Heart left ventricle (tissue), 16 donors: ENCODE measurements at regions of chr12 and their contacts with region 1.

Region 1: GRCh38 chr12:13094347-13094746 is 9.1 kb downstream of the GSG1 start:
- DNase-seq: no peak
- ATAC-seq: no peak
- H3K4me3 ChIP-seq: no peak overlapping the region
- H3K27ac ChIP-seq: peak overlapping the region in 1 of 12 donors; percentile 37
- H3K4me1 ChIP-seq: peaks cover 0 to 45% (median 14%) of the 10 kb centered on the region in 12 donors
- H3K27me3 ChIP-seq: no peaks in the 10 kb centered on the region
- CTCF ChIP-seq: no peak
- POLR2A ChIP-seq: no peak

Region 2: GRCh38 chr12:12916135-12916944 is 178.0 kb before region 1 on chr12:
- intact Hi-C with region 1: loop called in 4 of 10 experiments (anchors 5 to 10 kb)
- DNase-seq: peak; percentile 75 to 88 (median 84)
- ATAC-seq: peak; percentile 86 to 98 (median 96)
- H3K4me3 ChIP-seq: peak overlapping the region in 4 of 12 donors; percentile 10 to 23 (median 16)
- H3K27ac ChIP-seq: peak overlapping the region in 6 of 12 donors; percentile 5 to 46 (median 34)
- H3K4me1 ChIP-seq: peaks cover 0 to 14% (median 7%) of the 10 kb centered on the region in 12 donors
- H3K27me3 ChIP-seq: no peaks in the 10 kb centered on the region
- CTCF ChIP-seq: peak; percentile 96 to 99 (median 98)
- POLR2A ChIP-seq: no peak

Region 3: DNA sequence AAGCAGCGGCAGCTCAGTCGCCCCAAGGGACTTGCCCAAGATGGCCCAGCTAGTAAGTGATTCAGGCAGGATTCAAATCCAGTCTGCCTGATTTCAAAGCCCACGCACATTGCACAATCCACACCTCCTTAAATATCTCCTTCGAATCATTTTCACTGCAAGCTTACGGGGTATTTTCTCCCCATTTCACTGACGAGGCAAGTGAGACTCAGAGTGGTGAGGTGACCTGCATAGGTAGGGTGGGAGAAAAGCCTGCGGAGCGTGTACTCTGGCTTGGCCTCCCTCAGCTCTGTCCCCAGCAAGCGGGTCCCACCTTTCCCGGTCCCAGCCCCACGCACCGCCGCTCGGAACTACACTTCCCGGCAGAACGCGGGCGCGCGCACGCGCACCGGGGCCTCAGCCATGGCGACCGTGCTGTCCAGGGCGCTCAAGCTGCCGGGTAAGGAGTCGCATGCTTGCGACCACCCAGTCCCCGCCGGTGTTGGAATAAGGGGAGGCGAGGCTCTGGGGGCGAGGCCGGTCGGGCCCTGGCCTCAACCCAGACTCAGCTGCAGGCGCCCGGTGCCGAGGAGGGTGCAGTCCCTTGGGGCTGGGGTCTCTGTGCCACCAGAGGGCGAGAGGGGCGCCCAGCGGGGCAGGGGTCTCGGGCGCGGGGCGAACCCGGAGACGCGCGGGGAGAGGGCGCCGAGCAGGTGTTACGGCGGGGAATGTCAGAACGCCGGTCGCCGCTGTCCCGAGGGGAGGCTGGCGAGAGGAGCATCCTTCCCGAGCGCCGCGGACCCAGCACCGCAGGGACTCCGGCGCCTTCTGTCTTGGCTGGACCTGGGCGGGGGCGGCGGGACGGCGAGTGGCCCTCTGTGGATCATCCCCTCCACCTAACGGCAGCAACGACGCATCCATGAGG is 50.1 kb before region 1 on chr12 and contains the start of gene FAM234B:
- intact Hi-C with region 1: loop called in 1 of 10 experiments (anchors 2 kb)
- DNase-seq: peak; percentile 80 to 92 (median 85)
- ATAC-seq: peak; percentile 86 to 99 (median 98)
- H3K4me3 ChIP-seq: peak within 1 kb of the TSS; percentile 87 to 100 (median 96)
- H3K27ac ChIP-seq: peak within 1 kb of the TSS in 10 of 12 donors; percentile 22 to 83 (median 68)
- H3K4me1 ChIP-seq: peaks cover 0 to 22% (median 8%) of the 10 kb centered on the region in 12 donors
- H3K27me3 ChIP-seq: no peaks in the 10 kb centered on the region
- CTCF ChIP-seq: peak in 6 of 12 donors; percentile 10 to 57 (median 24)
- POLR2A ChIP-seq: no peak
- total RNA-seq, gene FAM234B: 1.5 to 3.5 (median 2.6) TPM

Region 4: DNA sequence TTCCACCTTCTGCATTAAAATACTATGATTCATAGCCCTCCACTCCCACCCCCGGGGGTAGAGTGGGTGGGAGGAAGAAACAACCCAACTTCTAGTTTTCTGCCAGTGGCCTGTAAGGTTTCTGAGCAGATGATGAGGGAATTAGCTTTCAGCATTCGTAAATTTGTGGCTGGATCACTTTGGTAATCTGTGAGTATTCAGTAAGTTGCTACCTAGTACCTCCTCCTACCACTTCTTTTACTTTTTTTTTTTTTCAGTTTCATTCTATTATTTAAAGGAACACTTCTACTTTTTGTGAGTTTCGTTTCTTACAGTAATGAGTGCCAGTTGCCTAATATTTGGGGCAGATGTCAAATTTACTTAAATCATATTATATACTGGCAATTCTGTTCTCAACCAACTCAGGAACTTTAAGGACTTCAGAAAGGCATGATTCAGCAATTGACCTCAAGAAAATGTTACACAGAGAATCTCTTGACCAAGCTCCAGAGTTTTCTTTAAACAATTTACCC is 59.7 kb after region 1 on chr12:
- intact Hi-C with region 1: loop called in 1 of 10 experiments (anchors 1 kb)
- DNase-seq: no peak
- ATAC-seq: peak in 1 of 4 donors; percentile 66
- H3K4me3 ChIP-seq: no peak overlapping the region
- H3K27ac ChIP-seq: peak overlapping the region in 3 of 12 donors; percentile 3 to 63 (median 25)
- H3K4me1 ChIP-seq: peaks cover 0 to 47% (median 5%) of the 10 kb centered on the region in 12 donors
- H3K27me3 ChIP-seq: no peaks in the 10 kb centered on the region
- CTCF ChIP-seq: no peak
- POLR2A ChIP-seq: no peak

Region 5: DNA sequence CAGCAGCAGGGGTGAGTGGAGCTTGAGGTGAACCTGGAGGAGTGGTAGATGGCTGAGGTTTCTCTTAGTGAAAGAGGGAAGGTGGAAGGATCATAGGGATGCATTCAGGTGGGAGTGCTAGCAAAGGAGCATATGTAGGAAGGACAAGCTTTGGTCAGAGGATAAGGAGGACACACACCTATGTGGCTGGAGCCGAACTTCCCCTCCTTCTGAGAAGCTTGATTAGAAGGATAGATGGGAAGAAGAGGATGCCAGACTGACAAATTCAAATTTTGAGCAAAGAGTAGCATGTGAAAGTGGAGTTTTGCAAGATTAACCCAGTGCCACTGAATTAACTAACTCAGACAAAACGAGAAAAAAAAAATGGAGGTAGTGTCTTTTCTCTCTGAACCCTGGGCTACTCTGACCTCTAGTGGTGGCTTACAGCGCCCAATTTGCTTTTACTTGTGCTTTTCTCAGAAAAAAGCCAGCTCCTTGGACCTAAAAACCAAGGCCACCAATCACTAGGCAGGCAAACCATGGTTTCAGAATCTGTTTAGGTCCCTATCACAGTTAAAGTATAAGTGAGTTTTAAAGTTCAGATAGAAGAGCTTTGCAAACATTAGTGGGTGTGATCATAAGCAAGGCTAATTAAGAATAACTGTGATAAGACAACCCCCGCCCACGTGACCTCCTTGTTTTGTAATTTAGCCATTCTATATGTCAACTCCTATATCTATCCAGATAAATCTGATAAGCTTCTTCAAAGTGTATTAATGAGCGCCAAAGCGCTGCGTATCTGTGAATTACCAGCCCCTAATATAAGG is 117.7 kb after region 1 on chr12:
- intact Hi-C with region 1: loop called in 7 of 10 experiments (anchors 1 to 5 kb)
- DNase-seq: peak in 3 of 5 donors; percentile 38 to 51 (median 43)
- ATAC-seq: peak in 2 of 4 donors; percentile 26 to 28
- H3K4me3 ChIP-seq: no peak overlapping the region
- H3K27ac ChIP-seq: peak overlapping the region in 1 of 12 donors; percentile 13
- H3K4me1 ChIP-seq: peaks cover 3 to 52% (median 45%) of the 10 kb centered on the region in 12 donors
- H3K27me3 ChIP-seq: no peaks in the 10 kb centered on the region
- CTCF ChIP-seq: peak; percentile 61 to 90 (median 76)
- POLR2A ChIP-seq: no peak

Region 6: GRCh38 chr12:13304924-13305323 is 210.6 kb after region 1 on chr12:
- intact Hi-C with region 1: no loop called
- DNase-seq: no peak
- ATAC-seq: peak in 1 of 4 donors; percentile 18
- H3K4me3 ChIP-seq: no peak overlapping the region
- H3K27ac ChIP-seq: no peak overlapping the region
- H3K4me1 ChIP-seq: no peaks in the 10 kb centered on the region
- H3K27me3 ChIP-seq: peaks cover 0 to 4% (median 0%) of the 10 kb centered on the region in 9 donors
- CTCF ChIP-seq: no peak
- POLR2A ChIP-seq: no peak

Region 7: GRCh38 chr12:13937735-13938134 is 843.4 kb after region 1 on chr12:
- intact Hi-C with region 1: no loop called
- DNase-seq: no peak
- ATAC-seq: no peak
- H3K4me3 ChIP-seq: no peak overlapping the region
- H3K27ac ChIP-seq: no peak overlapping the region
- H3K4me1 ChIP-seq: no peaks in the 10 kb centered on the region
- H3K27me3 ChIP-seq: no peaks in the 10 kb centered on the region
- CTCF ChIP-seq: no peak
- POLR2A ChIP-seq: no peak